Heart left ventricle (tissue), 16 donors: ENCODE measurements at regions of chr2 and their contacts with region 1.

Region 1: DNA sequence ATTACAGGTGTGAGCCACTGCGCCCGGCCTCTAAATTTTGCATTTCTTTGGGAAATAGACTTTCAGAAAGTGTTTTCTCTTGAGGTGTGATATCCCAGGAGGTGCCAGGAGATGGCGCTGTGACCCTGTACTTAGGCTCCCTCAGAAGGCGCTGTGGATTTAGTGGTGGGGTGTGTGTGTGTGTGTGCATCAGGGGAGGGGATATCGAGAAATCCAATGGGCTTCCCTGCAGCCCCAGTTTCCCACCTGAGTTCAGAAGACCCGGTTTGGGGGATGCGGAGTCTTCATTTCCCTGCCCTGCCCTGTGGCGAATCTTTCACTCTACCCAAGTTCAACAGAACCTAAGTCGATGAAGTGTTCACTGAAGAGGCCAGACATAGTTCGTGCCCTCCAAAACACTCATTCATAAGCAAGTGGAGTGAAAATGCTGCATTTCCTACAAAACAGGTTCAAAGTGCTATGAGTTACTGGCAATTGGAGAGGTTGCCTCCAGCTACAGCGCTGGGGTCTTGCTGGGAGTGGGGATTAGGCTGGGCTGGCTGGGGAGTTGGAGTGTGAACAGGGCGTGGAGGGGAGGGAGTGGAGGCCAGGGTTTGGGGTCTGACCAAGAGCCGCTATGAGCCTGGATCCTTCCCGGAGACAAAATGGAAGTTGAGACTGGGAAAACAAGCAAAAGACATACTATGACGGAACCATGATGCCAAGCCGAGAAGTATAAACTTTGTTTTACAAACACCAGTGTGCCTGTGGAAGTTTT is 6.5 kb upstream of the WNT6 start:
- DNase-seq: peak in 2 of 5 donors; percentile 36 to 53
- ATAC-seq: peak in 3 of 4 donors; percentile 48 to 70 (median 60)
- H3K4me3 ChIP-seq: no peak overlapping the region
- H3K27ac ChIP-seq: no peak overlapping the region
- H3K4me1 ChIP-seq: peaks cover 0 to 11% (median 0%) of the 10 kb centered on the region in 12 donors
- H3K27me3 ChIP-seq: peaks cover 0 to 78% (median 46%) of the 10 kb centered on the region in 9 donors
- CTCF ChIP-seq: peak; percentile 43 to 75 (median 63)
- POLR2A ChIP-seq: no peak

Region 2: DNA sequence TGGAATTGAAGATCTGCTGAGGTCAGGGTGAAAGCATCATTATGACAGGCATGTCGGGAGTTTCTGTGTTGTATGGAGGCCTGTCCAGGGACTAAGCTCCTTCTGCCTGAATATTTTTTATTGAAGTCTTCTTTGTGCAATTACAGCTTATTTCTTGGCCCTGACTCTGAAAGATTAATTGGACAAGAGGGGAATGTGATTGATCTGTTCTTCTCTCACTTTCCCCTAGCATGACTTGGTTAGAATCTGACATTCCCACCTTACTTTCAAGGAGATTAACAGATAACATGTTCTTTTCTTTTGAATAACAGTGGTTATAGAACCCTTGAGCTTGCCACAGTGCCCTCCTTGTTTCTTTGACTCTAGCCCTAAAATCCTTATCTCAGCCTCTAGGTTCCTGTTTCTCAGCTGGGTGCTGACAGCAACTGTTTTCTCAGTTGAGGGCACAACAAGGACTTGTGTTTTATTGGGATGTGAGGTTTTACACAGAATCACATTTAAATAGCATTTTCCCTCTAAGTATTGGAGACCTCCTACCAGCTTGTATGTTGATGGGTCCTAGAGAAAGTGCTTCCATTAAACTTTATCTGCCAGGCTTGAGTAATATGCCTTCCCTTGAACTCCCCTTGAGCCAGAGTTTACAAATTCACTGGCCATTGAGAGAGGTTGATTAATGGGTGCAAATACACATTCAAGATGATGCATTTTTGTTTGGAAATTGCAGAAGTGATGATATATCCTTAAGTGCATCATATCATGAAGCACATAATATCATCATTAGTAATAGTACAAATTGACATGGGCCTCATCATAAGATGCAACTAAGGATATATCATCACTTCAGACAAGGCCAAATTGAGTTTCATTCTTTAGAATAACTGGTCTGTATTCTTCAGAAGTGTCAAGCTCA is 130.0 kb before region 1 on chr2:
- intact Hi-C with region 1: loop called in 1 of 10 experiments (anchors 5 kb)
- DNase-seq: no peak
- ATAC-seq: no peak
- H3K4me3 ChIP-seq: no peak overlapping the region
- H3K27ac ChIP-seq: peak overlapping the region in 1 of 12 donors; percentile 24
- H3K4me1 ChIP-seq: peaks cover 0 to 24% (median 0%) of the 10 kb centered on the region in 12 donors
- H3K27me3 ChIP-seq: no peaks in the 10 kb centered on the region
- CTCF ChIP-seq: no peak
- POLR2A ChIP-seq: no peak

Region 3: DNA sequence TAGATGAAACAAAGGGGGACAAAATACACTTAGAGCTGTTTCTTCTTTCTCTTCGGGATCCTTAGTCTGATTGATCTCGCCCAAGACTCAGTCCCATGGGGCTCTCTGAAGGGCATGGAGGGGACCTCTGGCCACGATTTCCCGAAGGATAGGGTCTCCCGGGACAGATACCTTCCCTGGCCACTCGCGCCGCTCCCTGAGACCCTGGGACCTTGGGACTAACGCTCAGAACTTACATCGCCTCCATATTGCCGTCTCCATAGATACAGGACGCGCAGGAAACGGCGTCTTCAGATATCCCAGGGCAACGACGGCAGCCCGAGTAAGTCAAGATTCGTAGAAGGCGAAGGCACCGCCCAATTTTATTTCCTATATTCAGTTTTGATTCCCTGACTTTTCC is 188.2 kb after region 1 on chr2 and contains the start of gene CFAP65:
- intact Hi-C with region 1: no loop called
- DNase-seq: no peak
- ATAC-seq: peak in 2 of 4 donors; percentile 42 to 48
- H3K4me3 ChIP-seq: peak within 1 kb of the TSS in 7 of 12 donors; percentile 9 to 37 (median 26)
- H3K27ac ChIP-seq: no peak within 1 kb of the TSS
- H3K4me1 ChIP-seq: peaks cover 0 to 6% (median 0%) of the 10 kb centered on the region in 12 donors
- H3K27me3 ChIP-seq: peaks cover 8 to 78% (median 33%) of the 10 kb centered on the region in 9 donors
- CTCF ChIP-seq: no peak
- POLR2A ChIP-seq: no peak
- total RNA-seq, gene CFAP65: 0.04 TPM in 1 of 9 donors, not detected in the others